Common myeloid progenitor, CD34-positive (primary cell): ENCODE measurements at regions of chr18 and their contacts with region 1.

Region 1: GRCh38 chr18:79540161-79540903 is 139.3 kb upstream of the CTDP1 start:
- DNase-seq: no peak
- H3K4me3 ChIP-seq: no peak overlapping the region
- H3K27ac ChIP-seq: no peak overlapping the region
- H3K4me1 ChIP-seq: peaks cover 0 to 11% (median 2%) of the 10 kb centered on the region in 4 experiments
- H3K27me3 ChIP-seq: no peaks in the 10 kb centered on the region

Region 2: GRCh38 chr18:79411614-79412526 is 128.5 kb before region 1 on chr18:
- CTCF ChIA-PET with region 1: no interaction called
- POLR2A ChIA-PET with region 1: no interaction called
- DNase-seq: no peak
- H3K4me3 ChIP-seq: no peak overlapping the region
- H3K27ac ChIP-seq: no peak overlapping the region
- H3K4me1 ChIP-seq: peaks cover 0 to 13% (median 3%) of the 10 kb centered on the region in 4 experiments
- H3K27me3 ChIP-seq: no peaks in the 10 kb centered on the region

Region 3: GRCh38 chr18:79528846-79529245 is 11.5 kb before region 1 on chr18:
- CTCF ChIA-PET with region 1: interaction called, 18 read pairs
- POLR2A ChIA-PET with region 1: no interaction called
- DNase-seq: peak; percentile 70 to 85 (median 75)
- H3K4me3 ChIP-seq: no peak overlapping the region
- H3K27ac ChIP-seq: no peak overlapping the region
- H3K4me1 ChIP-seq: peaks cover 0 to 21% (median 14%) of the 10 kb centered on the region in 4 experiments
- H3K27me3 ChIP-seq: no peaks in the 10 kb centered on the region

Region 4: DNA sequence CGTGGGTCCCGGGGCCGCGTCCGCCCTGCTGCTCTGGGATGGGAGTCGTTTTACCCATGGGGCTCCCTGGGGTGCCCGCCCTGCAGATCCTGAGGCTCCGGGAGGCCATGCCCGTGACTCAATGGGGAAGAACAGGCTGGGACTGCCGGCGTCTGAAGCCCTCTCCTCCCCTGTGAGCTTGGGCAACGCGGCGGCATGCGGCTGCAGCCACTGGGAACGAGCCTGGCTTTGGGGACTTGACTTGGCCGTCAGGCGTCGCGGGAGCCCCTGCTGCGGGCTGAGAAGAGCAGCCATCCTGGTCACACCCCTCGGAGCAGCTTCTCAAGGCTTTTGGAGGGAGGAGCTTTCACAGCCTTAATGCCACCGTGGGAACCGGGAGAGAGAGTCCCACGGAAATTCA is 12.4 kb after region 1 on chr18:
- CTCF ChIA-PET with region 1: no interaction called
- POLR2A ChIA-PET with region 1: no interaction called
- DNase-seq: no peak
- H3K4me3 ChIP-seq: no peak overlapping the region
- H3K27ac ChIP-seq: no peak overlapping the region
- H3K4me1 ChIP-seq: no peaks in the 10 kb centered on the region
- H3K27me3 ChIP-seq: no peaks in the 10 kb centered on the region